ENCODE measurements at regions of chr2 and their contacts with region 1.

Region 1: GRCh38 chr2:174546581-174547506 is 50.8 kb downstream of the WIPF1 start:
- DNase-seq: peak; percentile 46
- ATAC-seq: peak; percentile 84
- H3K4me3 Mint-ChIP-seq: no peak overlapping the region
- H3K27ac Mint-ChIP-seq: peak overlapping the region; percentile 39
- H3K4me1 Mint-ChIP-seq: peaks cover 15% of the 10 kb centered on the region
- H3K27me3 Mint-ChIP-seq: no peaks in the 10 kb centered on the region

Region 2: DNA sequence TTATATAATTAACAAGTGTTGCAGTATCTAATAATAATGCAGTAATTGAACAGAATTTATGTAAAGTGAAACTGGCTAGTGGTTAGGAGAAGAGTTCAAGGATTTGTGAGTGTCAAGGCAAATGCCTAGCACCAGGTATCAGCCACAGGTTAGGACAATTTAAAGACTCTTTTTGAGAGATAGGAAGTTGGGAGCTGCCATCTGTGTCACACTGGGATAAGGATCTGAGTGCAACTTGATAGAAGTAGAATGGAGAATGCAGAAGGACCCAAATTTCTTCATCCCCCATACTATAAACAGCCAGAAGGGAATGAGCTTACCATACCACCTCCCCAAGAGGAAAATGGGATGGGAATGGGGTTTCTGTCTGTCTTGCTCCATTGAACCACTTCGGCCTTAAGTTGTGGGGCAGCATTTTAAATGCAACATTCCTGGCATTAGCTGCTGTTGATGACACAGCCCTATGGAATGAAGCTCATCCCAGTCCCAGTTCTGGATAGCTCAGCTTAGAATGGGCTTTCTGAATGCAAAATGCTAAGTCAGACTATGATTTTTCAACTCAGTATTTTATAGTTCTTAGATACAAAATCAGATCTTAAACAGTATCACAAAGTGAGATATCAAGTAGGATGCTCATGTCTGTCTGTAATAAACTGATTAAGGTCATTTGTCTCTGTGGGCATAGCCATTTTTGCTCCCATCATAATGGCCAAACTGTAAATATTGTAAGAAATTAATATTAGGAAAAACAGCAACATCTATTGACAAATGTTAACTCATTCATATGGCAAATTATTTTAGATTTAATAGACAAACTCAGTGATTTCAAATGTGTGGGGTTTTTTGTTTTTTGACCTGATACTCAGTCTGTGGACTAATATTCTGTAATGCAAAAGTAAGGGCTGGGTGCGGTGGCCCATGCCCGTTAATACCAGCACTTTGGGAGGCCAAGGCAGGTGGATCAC is 104.0 kb before region 1 on chr2:
- POLR2A ChIA-PET with region 1: no interaction called
- DNase-seq: no peak
- ATAC-seq: no peak
- H3K4me3 Mint-ChIP-seq: no peak overlapping the region
- H3K27ac Mint-ChIP-seq: no peak overlapping the region
- H3K4me1 Mint-ChIP-seq: no peaks in the 10 kb centered on the region
- H3K27me3 Mint-ChIP-seq: no peaks in the 10 kb centered on the region

Region 3: DNA sequence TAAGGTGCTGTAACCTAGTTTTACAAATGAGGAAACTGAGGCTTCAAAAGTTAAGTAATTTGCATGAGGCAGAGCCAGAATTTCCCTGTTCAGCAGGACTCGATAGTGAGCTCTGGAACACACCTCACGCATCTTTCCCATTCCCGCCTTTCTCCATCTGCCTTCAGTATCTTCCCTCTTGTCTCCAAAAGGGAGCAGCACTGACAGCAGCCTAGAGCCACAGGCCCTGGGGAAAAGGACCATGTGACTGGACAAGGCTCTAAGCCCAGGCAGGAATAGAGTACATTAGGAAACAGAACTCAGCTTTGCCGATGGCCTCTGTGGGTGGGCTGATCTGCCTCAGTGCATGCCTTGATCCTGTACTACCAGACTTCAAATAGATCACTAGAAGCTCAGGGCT is 81.5 kb before region 1 on chr2:
- POLR2A ChIA-PET with region 1: interaction called, 13 read pairs
- DNase-seq: no peak
- ATAC-seq: no peak
- H3K4me3 Mint-ChIP-seq: no peak overlapping the region
- H3K27ac Mint-ChIP-seq: no peak overlapping the region
- H3K4me1 Mint-ChIP-seq: peaks cover 3% of the 10 kb centered on the region
- H3K27me3 Mint-ChIP-seq: no peaks in the 10 kb centered on the region

Region 4: DNA sequence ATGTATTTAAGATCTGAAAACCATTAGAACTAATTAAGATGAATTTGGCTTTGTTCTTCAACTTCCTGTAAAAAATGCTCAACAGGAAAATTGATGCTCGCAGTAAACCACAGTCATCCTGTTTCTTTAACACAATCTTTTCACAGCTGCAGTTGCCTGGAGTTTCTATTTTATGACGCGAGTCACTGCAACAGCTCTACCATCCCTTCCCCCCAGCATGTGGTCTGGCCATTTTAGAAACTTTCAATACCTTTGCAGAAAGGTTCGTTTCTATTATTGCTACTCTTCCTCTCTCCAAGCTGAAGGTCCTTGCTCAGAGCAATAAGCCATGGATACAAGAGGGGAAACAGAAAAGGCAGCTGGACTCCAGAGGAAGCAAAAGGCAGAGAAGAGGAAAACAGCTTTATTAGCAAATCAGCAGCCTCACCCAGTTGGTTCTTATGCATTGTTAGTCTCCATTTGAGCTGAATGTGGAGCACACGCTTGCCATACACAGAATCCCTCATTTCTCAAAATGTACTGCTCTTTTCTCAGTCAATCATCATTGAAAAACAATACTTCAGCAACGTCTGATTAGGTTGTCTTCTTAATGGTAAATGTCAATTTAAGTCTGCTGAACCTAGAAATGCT is 46.8 kb after region 1 on chr2:
- POLR2A ChIA-PET with region 1: no interaction called
- DNase-seq: no peak
- ATAC-seq: peak; percentile 70
- H3K4me3 Mint-ChIP-seq: peak overlapping the region; percentile 89
- H3K27ac Mint-ChIP-seq: peak overlapping the region; percentile 99
- H3K4me1 Mint-ChIP-seq: peaks cover 57% of the 10 kb centered on the region
- H3K27me3 Mint-ChIP-seq: no peaks in the 10 kb centered on the region

Measured in activated naive CD8-positive, alpha-beta T cell treated with anti-CD3 and anti-CD28 coated beads, Interleukin-2, amount 10 ng/mL, durations not matched to agents 7 days and 5 days (primary cell).